Endothelial cell of umbilical vein (primary cell): ENCODE measurements at regions of chr6 and their contacts with region 1.

Region 1: GRCh38 chr6:44041461-44042260 is 85.6 kb downstream of the MRPL14 start:
- DNase-seq: peak; percentile 82
- H3K4me3 ChIP-seq: no peak overlapping the region
- H3K27ac ChIP-seq: peak overlapping the region; percentile 72
- H3K4me1 ChIP-seq: peaks cover 26% of the 10 kb centered on the region
- H3K27me3 ChIP-seq: no peaks in the 10 kb centered on the region
- CTCF ChIP-seq: no peak
- POLR2A ChIP-seq: peak; percentile 32

Region 2: DNA sequence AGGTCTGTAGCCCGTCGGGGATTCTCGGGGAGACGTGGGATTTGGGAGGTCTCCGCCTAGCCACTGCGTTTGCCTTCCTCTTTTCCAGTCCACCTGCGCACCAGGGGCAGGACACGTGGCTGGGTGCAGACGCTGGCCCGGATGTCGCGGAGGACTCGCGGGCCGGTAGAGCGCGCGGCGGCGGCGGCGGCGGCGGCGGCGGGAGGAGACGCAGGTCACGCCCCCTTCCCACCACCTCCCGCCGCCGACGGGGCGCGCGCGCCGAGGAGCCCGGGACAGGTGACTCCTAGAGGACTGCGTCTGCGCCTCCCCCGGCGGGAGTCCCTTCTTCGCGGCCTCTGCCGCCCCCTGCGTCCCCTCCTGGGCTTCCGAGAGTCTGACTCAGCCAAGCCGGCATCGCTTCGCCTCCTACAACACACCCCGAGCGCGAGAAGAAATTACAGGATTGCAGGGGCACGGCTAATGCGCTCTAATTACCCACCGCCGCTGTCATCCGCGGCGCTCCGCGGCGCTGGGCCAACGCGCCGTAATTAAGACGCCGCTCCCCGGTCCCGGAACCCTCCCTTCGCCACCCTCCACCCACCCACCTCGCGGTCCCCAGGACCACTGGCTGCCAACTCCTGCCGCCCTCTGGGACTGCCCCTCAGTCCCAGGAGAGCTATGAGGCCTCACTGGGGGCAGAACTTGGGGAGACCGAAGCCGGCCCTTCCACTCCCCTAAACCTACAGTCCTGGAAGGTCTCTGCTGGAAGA is 38.9 kb before region 1 on chr6:
- CTCF ChIA-PET with region 1: no interaction called
- POLR2A ChIA-PET with region 1: no interaction called
- dilution Hi-C with region 1: no loop called
- intact Hi-C with region 1: loop called (anchors 5 kb)
- DNase-seq: peak; percentile 25
- H3K4me3 ChIP-seq: peak overlapping the region; percentile 2 to 41 (median 38)
- H3K27ac ChIP-seq: no peak overlapping the region
- H3K4me1 ChIP-seq: peaks cover 2% of the 10 kb centered on the region
- H3K27me3 ChIP-seq: peaks cover 26 to 27% of the 10 kb centered on the region in 2 experiments
- CTCF ChIP-seq: peak in 1 of 2 donors; percentile 18
- POLR2A ChIP-seq: no peak

Region 3: GRCh38 chr6:44052419-44053023 is 10.9 kb after region 1 on chr6:
- CTCF ChIA-PET with region 1: interaction called, 11 read pairs
- POLR2A ChIA-PET with region 1: no interaction called
- dilution Hi-C with region 1: no loop called
- intact Hi-C with region 1: no loop called
- DNase-seq: no peak
- H3K4me3 ChIP-seq: no peak overlapping the region
- H3K27ac ChIP-seq: no peak overlapping the region
- H3K4me1 ChIP-seq: peaks cover 26% of the 10 kb centered on the region
- H3K27me3 ChIP-seq: no peaks in the 10 kb centered on the region
- CTCF ChIP-seq: no peak
- POLR2A ChIP-seq: no peak

Region 4: GRCh38 chr6:44058617-44059358 is 17.1 kb after region 1 on chr6:
- CTCF ChIA-PET with region 1: interaction called, 8 read pairs
- POLR2A ChIA-PET with region 1: no interaction called
- dilution Hi-C with region 1: no loop called
- intact Hi-C with region 1: loop called (anchors 2 kb)
- DNase-seq: peak; percentile 95
- H3K4me3 ChIP-seq: no peak overlapping the region
- H3K27ac ChIP-seq: peak overlapping the region; percentile 93
- H3K4me1 ChIP-seq: peaks cover 39% of the 10 kb centered on the region
- H3K27me3 ChIP-seq: no peaks in the 10 kb centered on the region
- CTCF ChIP-seq: no peak
- POLR2A ChIP-seq: no peak